ENCODE measurements at regions of chr6 and their contacts with region 1.

Region 1: GRCh38 chr6:143536865-143537691 is 25.6 kb upstream of the FUCA2 start:
- DNase-seq: peak in 34 of 35 experiments; percentile 28 to 76 (median 48)
- ATAC-seq: peak; percentile 69 to 82 (median 73)
- H3K4me3 ChIP-seq: peak overlapping the region; percentile 73 to 83
- H3K4me3 Mint-ChIP-seq: peak overlapping the region; percentile 81 to 89 (median 84)
- H3K27ac ChIP-seq: peak overlapping the region; percentile 79
- H3K27ac Mint-ChIP-seq: peak overlapping the region; percentile 86 to 92
- H3K4me1 ChIP-seq: peaks cover 0 to 51% of the 10 kb centered on the region in 2 experiments
- H3K4me1 Mint-ChIP-seq: peaks cover 40 to 59% (median 45%) of the 10 kb centered on the region in 3 donors
- H3K27me3 ChIP-seq: no peaks in the 10 kb centered on the region
- H3K27me3 Mint-ChIP-seq: no peaks in the 10 kb centered on the region

Region 2: DNA sequence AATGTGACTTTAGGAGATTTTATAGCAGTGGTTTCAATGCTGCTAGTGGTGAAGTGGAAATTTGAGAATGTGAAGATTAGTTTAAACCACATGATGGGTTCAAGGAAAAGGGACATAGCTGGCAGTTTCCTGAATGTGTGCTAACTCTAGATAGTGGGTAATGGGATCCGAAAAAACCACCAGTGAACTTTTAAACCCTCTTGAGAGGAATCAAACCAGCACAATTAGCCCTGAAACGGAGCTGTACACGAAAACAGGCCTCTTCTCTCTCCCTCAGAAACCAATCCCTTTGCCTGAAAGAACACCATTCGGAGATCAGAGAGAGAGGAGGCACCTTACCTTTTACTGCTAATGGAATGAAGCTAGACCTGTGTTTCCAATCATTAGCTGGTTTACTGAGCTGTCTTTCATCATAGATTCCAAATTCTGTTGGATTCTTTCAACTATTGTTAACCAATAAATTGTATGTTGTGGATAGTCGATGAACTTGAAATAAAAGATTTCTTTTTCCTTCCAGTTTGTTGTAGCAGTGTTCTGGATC is 372.4 kb before region 1 on chr6:
- CTCF ChIA-PET with region 1: no interaction called
- POLR2A ChIA-PET with region 1: no interaction called
- DNase-seq: no peak
- ATAC-seq: no peak
- H3K4me3 ChIP-seq: no peak overlapping the region
- H3K4me3 Mint-ChIP-seq: no peak overlapping the region
- H3K27ac ChIP-seq: no peak overlapping the region
- H3K27ac Mint-ChIP-seq: no peak overlapping the region
- H3K4me1 ChIP-seq: no peaks in the 10 kb centered on the region
- H3K4me1 Mint-ChIP-seq: no peaks in the 10 kb centered on the region
- H3K27me3 ChIP-seq: no peaks in the 10 kb centered on the region
- H3K27me3 Mint-ChIP-seq: no peaks in the 10 kb centered on the region

Region 3: GRCh38 chr6:143510991-143511891 is 25.8 kb before region 1 on chr6 and contains the start of gene FUCA2:
- CTCF ChIA-PET with region 1: interaction called, 3 to 12 read pairs
- POLR2A ChIA-PET with region 1: no interaction called
- DNase-seq: peak; percentile 45 to 80 (median 58)
- ATAC-seq: peak; percentile 82 to 87 (median 83)
- H3K4me3 ChIP-seq: peak within 1 kb of the TSS; percentile 62 to 81
- H3K4me3 Mint-ChIP-seq: peak within 1 kb of the TSS; percentile 82 to 95 (median 94)
- H3K27ac ChIP-seq: peak within 1 kb of the TSS; percentile 59
- H3K27ac Mint-ChIP-seq: peak within 1 kb of the TSS; percentile 89 to 90
- H3K4me1 ChIP-seq: peaks cover 0 to 23% of the 10 kb centered on the region in 2 experiments
- H3K4me1 Mint-ChIP-seq: peaks cover 14 to 36% (median 19%) of the 10 kb centered on the region in 3 donors
- H3K27me3 ChIP-seq: no peaks in the 10 kb centered on the region
- H3K27me3 Mint-ChIP-seq: no peaks in the 10 kb centered on the region
- total RNA-seq, gene FUCA2: 4.6 to 9.0 (median 7.1) TPM